Esophagus muscularis mucosa (tissue), 4 donors: ENCODE measurements at regions of chr7 and their contacts with region 1.

Region 1: GRCh38 chr7:93902777-93903423 is 3.5 kb upstream of the GNGT1 start:
- DNase-seq: no peak
- H3K4me3 ChIP-seq: no peak overlapping the region
- H3K27ac ChIP-seq: no peak overlapping the region
- H3K4me1 ChIP-seq: no peaks in the 10 kb centered on the region
- H3K27me3 ChIP-seq: no peaks in the 10 kb centered on the region
- CTCF ChIP-seq: peak; percentile 62 to 78 (median 68)
- EP300 ChIP-seq: no peak
- POLR2A ChIP-seq: no peak

Region 2: DNA sequence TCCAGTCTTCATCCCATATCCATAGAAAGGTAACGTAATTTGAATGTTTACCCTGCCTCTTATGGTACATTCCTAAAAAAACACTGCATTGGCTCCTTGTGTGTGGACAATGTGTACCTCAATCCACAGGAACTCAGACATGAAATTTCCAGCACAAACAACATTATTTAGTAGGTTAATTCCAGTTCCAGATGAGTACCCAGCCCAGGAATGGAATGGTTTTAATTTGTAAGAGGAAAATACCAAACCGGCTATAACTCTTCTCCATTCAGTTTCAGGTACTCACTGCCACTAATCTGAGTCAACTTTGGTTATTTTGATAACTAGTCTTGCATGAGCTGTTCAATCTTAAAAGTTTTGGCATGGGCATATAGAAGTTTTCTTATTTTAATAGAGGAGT is 51.4 kb before region 1 on chr7:
- intact Hi-C with region 1: no loop called
- DNase-seq: no peak
- H3K4me3 ChIP-seq: no peak overlapping the region
- H3K27ac ChIP-seq: no peak overlapping the region
- H3K4me1 ChIP-seq: no peaks in the 10 kb centered on the region
- H3K27me3 ChIP-seq: no peaks in the 10 kb centered on the region
- CTCF ChIP-seq: no peak
- EP300 ChIP-seq: no peak
- POLR2A ChIP-seq: no peak

Region 3: DNA sequence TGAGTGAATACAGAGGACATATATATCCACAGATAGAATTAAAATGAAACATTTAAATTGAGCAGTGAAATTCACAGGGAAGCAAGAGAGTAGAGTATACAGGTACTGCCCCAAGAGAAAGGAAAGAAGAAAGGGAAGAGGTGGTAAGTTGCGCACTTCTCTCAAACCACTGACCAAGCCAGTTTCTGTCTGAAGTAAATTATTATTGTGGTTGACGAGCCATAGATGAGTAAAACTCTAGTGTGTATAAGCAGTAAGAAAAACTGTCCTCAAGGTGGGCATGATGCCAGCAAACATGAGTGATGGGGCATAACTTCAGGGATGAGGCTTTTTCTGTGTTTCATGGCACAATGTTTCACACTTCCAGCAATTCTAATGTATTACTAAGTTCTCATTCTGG is 105.6 kb after region 1 on chr7:
- intact Hi-C with region 1: loop called (anchors 5 kb)
- DNase-seq: no peak
- H3K4me3 ChIP-seq: no peak overlapping the region
- H3K27ac ChIP-seq: no peak overlapping the region
- H3K4me1 ChIP-seq: peaks cover 0 to 7% (median 5%) of the 10 kb centered on the region in 4 donors
- H3K27me3 ChIP-seq: no peaks in the 10 kb centered on the region
- CTCF ChIP-seq: no peak
- EP300 ChIP-seq: no peak
- POLR2A ChIP-seq: no peak

Region 4: DNA sequence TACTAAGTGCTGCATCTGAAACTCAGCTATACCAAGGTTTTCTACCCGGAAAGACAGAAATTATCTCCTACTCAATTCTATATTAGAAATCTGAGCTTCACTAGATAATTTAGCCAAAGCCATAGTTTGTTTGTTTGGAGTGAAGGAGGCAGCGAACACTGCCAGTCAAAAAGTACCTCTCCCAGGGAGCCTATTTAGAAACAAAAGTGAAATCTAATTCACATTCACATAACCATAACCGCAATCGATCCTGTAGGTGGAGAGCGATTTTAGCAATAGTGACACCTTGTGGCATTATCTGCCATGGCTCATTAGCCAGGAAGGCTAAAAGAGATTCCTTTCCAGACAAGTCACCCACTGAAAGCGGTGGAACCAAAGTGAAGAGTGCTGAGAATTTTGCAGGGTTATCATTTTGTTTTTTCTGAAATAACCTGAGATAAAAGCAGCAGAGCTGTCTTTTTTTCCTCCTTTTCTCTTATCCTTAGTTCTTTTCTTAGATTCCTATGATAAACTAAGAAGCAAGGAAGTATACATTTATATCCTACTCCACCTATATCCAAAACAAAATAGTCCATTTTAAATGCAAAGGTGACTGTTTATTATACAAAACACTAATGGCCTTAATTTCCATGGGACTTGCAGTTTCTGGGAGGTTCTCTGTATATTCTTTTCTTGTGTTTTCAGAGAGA is 184.9 kb after region 1 on chr7:
- intact Hi-C with region 1: loop called (anchors 5 kb)
- DNase-seq: no peak
- H3K4me3 ChIP-seq: peak overlapping the region; percentile 16 to 41 (median 34)
- H3K27ac ChIP-seq: no peak overlapping the region
- H3K4me1 ChIP-seq: peaks cover 0 to 8% (median 3%) of the 10 kb centered on the region in 4 donors
- H3K27me3 ChIP-seq: peaks cover 0 to 7% (median 0%) of the 10 kb centered on the region in 4 donors
- CTCF ChIP-seq: peak; percentile 60 to 76 (median 67)
- EP300 ChIP-seq: no peak
- POLR2A ChIP-seq: no peak

Region 5: DNA sequence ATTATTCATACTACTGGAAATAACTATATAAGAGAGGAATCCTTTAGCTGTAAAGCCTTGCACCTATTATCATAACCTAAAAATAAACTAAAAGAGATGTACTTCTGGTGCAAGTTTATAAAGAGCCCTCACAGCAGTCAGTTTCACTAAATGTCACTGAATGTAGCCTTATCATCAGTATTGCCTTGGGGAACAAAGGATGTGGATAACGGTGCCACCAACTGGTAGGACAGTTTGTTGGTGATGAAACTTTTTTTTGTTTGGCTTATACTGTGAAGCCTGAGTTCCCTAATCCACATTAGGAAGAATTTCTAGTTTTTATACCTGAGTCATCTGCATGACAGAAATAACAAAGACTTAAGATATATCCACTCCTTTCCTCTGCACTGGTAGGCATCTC is 373.9 kb after region 1 on chr7:
- intact Hi-C with region 1: loop called (anchors 10 kb)
- DNase-seq: no peak
- H3K4me3 ChIP-seq: no peak overlapping the region
- H3K27ac ChIP-seq: no peak overlapping the region
- H3K4me1 ChIP-seq: no peaks in the 10 kb centered on the region
- H3K27me3 ChIP-seq: no peaks in the 10 kb centered on the region
- CTCF ChIP-seq: peak in 1 of 3 experiments; percentile 34
- EP300 ChIP-seq: no peak
- POLR2A ChIP-seq: no peak

Region 6: DNA sequence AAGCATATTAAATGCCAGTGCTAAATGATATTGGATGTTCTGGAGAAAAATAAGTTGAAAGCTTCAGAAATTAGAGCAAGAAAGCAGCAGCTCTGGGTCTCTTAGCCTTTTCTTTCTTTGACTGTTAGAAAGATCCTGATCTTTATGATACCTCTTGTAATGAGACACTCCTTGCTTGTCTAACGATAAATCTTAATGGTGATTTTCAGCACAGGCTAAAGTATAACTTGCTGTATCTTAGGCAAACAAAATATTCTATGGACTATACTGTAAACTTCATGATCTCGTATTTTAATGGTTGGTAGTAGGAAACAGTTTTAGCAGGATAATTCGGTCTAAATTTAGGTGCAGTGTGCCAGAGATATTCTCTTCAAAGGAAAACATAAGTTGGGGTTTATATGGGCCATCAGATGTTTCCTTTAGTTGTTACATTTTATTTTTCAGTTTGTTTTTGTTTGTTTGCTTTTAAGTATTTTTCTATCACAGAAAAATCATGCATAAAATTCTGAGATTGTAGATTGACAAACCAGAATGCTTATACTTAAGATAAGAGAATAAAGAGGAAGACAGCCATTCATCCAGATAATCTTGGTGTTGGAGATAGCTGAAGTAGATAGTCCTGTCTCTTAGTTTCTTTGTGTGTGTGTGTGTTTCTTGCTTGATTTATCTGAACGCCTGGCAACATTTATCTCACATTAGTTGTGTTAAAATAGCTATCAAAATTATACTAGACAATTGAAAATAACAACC is 611.4 kb after region 1 on chr7:
- intact Hi-C with region 1: no loop called
- DNase-seq: no peak
- H3K4me3 ChIP-seq: no peak overlapping the region
- H3K27ac ChIP-seq: no peak overlapping the region
- H3K4me1 ChIP-seq: peaks cover 15 to 38% (median 29%) of the 10 kb centered on the region in 4 donors
- H3K27me3 ChIP-seq: no peaks in the 10 kb centered on the region
- CTCF ChIP-seq: no peak
- EP300 ChIP-seq: no peak
- POLR2A ChIP-seq: no peak